Naive thymus-derived CD4-positive, alpha-beta T cell (primary cell): ENCODE measurements at regions of chr17 and their contacts with region 1.

Region 1: DNA sequence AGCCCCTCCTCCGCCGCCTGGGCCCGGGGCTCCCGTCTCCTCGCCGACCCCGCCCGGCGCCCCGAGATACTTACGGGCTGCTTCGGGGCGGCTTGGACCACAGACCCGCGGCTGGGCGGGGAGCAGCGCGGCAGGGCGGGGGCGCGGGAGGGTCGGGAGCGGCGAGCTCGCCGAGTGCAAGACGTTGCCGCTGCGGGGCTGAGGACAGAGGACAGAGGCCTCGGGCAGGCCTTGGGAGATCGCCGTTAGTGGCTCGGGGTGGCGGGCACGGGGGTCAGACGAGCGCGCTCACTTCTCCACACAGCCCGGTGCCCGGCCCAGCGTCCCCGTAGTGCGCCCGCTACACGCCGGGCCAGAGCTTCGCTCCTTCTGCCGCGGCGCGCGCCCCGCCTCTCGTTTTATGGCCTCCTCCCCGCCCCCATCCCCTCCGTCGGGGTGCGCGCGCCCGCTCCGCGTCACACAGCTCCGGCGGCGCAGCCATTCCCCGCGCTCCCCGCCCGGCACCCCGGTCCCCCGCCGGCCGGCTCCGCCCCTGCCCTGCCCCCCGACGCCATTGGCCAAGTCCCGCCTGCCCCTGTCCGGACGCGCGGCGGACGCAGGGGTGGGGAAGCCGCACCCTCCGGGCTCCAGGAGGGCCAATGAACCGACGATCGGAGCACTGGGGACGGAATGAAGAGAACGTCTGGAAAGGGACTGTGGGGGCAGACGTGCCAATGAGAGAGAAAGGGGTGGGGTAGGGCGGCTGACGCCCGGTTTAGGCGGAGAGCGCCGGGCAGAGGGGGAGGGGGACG is at the start of gene TOB1:
- DNase-seq: peak; percentile 92 to 98 (median 95)
- ATAC-seq: peak; percentile 86
- H3K4me3 ChIP-seq: peak within 1 kb of the TSS; percentile 89
- H3K4me3 Mint-ChIP-seq: peak within 1 kb of the TSS; percentile 96 to 100 (median 100)
- H3K27ac ChIP-seq: peak within 1 kb of the TSS; percentile 98
- H3K27ac Mint-ChIP-seq: peak within 1 kb of the TSS; percentile 98 to 100 (median 100)
- H3K4me1 ChIP-seq: peaks cover 41 to 50% of the 10 kb centered on the region in 2 donors
- H3K4me1 Mint-ChIP-seq: peaks cover 31 to 65% (median 57%) of the 10 kb centered on the region in 7 donors
- H3K27me3 ChIP-seq: no peaks in the 10 kb centered on the region
- H3K27me3 Mint-ChIP-seq: peaks cover 0 to 2% (median 0%) of the 10 kb centered on the region in 5 donors
- total RNA-seq, gene TOB1: 51.5 to 261 (median 131) TPM

Region 2: GRCh38 chr17:50151041-50151936 is 714.9 kb before region 1 on chr17:
- CTCF ChIA-PET with region 1: no interaction called
- POLR2A ChIA-PET with region 1: interaction called, 3 read pairs
- intact Hi-C with region 1: loop called in 1 of 2 experiments (anchors 5 kb)
- DNase-seq: peak; percentile 73 to 88 (median 79)
- ATAC-seq: peak; percentile 84
- H3K4me3 ChIP-seq: peak overlapping the region; percentile 94
- H3K4me3 Mint-ChIP-seq: peak overlapping the region; percentile 82 to 95 (median 87)
- H3K27ac ChIP-seq: peak overlapping the region; percentile 74
- H3K27ac Mint-ChIP-seq: peak overlapping the region; percentile 71 to 96 (median 84)
- H3K4me1 ChIP-seq: peaks cover 26 to 37% of the 10 kb centered on the region in 2 donors
- H3K4me1 Mint-ChIP-seq: peaks cover 11 to 52% (median 44%) of the 10 kb centered on the region in 7 donors
- H3K27me3 ChIP-seq: no peaks in the 10 kb centered on the region
- H3K27me3 Mint-ChIP-seq: no peaks in the 10 kb centered on the region

Region 3: GRCh38 chr17:50163843-50164696 is 702.1 kb before region 1 on chr17:
- CTCF ChIA-PET with region 1: no interaction called
- POLR2A ChIA-PET with region 1: no interaction called
- intact Hi-C with region 1: no loop called
- DNase-seq: no peak
- ATAC-seq: no peak
- H3K4me3 ChIP-seq: no peak overlapping the region
- H3K4me3 Mint-ChIP-seq: no peak overlapping the region
- H3K27ac ChIP-seq: no peak overlapping the region
- H3K27ac Mint-ChIP-seq: peak overlapping the region in 5 of 9 donors; percentile 4 to 93 (median 55)
- H3K4me1 ChIP-seq: peaks cover 22 to 29% of the 10 kb centered on the region in 2 donors
- H3K4me1 Mint-ChIP-seq: peaks cover 27 to 36% (median 33%) of the 10 kb centered on the region in 7 donors
- H3K27me3 ChIP-seq: no peaks in the 10 kb centered on the region
- H3K27me3 Mint-ChIP-seq: peaks cover 0 to 12% (median 0%) of the 10 kb centered on the region in 5 donors

Region 4: DNA sequence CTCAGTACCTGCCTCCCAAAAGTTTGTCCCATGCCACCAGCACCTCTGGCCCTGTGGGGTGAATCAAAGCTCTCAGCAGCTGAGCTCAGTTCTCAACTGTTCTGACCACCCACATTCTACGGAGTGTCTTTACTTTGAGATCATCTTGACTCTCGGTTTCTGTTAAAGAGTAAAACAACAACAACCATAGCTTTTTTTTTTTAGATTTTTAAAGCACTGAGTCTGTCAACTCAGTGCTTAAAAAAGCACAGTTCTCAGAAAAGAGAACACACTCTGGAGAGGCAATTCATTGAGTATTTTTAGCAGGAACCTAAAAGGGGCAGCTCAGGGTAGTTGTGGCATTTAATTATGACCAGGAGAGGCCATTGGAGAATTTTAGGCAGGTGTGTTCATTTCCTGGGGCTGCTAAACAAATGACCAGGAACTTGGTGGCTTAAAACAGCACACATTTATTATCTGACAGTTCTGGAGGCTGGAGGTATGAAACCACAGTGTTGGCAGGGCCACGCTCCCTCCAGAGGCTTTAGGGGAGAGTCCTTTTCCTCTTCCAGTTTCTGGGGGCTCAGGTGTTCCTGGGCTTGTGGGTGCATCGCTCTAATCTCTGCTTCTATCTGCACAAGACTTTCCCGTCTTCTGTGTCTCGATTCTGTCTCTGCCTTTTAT is 37.5 kb before region 1 on chr17:
- CTCF ChIA-PET with region 1: no interaction called
- POLR2A ChIA-PET with region 1: no interaction called
- intact Hi-C with region 1: no loop called
- DNase-seq: no peak
- ATAC-seq: no peak
- H3K4me3 ChIP-seq: no peak overlapping the region
- H3K4me3 Mint-ChIP-seq: no peak overlapping the region
- H3K27ac ChIP-seq: no peak overlapping the region
- H3K27ac Mint-ChIP-seq: no peak overlapping the region
- H3K4me1 ChIP-seq: no peaks in the 10 kb centered on the region
- H3K4me1 Mint-ChIP-seq: no peaks in the 10 kb centered on the region
- H3K27me3 ChIP-seq: no peaks in the 10 kb centered on the region
- H3K27me3 Mint-ChIP-seq: peaks cover 2 to 13% (median 9%) of the 10 kb centered on the region in 5 donors

Region 5: DNA sequence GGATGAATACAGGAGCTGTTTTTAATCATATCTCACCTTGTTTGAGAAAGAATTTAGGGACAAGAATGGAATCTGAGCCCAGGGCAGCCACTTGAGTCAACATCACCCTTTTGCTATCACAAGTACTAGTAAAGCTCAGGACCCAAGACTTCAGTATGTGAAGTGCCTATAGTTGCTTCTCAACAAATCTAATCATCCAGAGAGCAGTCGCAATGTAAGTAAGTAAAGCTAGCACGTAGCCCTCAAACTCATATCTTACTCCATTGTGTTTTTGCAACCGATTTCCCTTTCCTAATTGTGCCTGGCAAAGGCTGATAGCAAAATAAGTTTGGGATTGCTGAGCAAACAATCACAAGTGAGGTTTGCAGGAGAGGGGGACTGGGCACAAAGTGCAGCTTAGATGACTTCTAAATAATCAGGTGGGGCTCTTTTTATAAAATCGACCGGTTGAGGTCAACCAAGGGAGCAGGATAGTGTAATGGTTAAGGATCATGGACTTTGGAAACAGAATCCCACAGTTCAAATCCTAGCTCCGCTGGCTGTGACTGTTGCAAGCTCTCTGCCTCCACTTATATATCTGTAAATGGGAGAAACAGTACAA is 13.1 kb before region 1 on chr17:
- CTCF ChIA-PET with region 1: interaction called, 58 read pairs
- POLR2A ChIA-PET with region 1: interaction called, 282 read pairs
- intact Hi-C with region 1: loop called (anchors 1 kb)
- DNase-seq: no peak
- ATAC-seq: no peak
- H3K4me3 ChIP-seq: no peak overlapping the region
- H3K4me3 Mint-ChIP-seq: peak overlapping the region in 8 of 10 donors; percentile 75 to 89 (median 85)
- H3K27ac ChIP-seq: no peak overlapping the region
- H3K27ac Mint-ChIP-seq: peak overlapping the region in 7 of 9 donors; percentile 41 to 93 (median 88)
- H3K4me1 ChIP-seq: peaks cover 5 to 7% of the 10 kb centered on the region in 2 donors
- H3K4me1 Mint-ChIP-seq: peaks cover 18 to 40% (median 28%) of the 10 kb centered on the region in 7 donors
- H3K27me3 ChIP-seq: no peaks in the 10 kb centered on the region
- H3K27me3 Mint-ChIP-seq: peaks cover 0 to 32% (median 0%) of the 10 kb centered on the region in 5 donors

Region 6: DNA sequence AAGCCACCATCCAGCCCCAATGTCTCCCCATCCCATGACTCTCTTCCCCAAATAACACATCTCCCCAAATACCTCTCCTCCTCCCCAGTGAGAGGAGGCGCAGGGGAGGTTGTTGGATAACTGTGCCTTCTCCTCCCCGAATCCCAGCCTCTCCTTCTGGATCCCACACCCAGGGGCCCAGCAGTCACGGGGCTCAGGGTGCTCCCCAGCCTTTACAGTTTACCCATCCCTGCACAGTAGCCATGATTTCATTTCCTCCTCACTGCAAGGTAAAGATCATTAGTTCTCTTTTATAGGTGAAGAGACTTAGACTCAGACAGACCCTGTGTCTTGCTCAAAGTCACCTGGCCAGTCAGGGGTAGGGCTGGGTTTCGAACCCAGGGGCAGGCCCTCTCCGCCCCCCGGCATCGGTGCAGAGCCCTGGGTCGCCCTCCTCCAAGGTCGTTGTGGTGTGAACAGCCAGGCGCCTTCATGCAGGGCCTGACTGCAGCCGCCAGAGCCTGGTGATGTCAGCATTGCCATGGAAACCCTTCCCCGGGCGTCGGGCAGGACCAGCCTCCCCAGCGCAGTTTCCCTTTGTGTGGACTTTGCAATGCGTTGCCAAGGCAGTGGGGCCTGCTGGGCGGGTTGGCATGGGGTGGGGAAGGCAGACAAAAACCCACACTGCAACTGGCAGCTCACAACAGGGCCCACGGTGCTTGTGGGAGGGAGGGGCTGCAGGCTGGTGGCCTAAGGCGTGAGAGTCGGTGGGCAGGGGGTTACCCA is 53.3 kb after region 1 on chr17:
- CTCF ChIA-PET with region 1: interaction called, 11 read pairs
- POLR2A ChIA-PET with region 1: interaction called, 828 read pairs
- intact Hi-C with region 1: loop called (anchors 1 kb)
- DNase-seq: peak; percentile 67 to 91 (median 83)
- ATAC-seq: peak; percentile 95
- H3K4me3 ChIP-seq: no peak overlapping the region
- H3K4me3 Mint-ChIP-seq: peak overlapping the region; percentile 36 to 86 (median 75)
- H3K27ac ChIP-seq: peak overlapping the region; percentile 76
- H3K27ac Mint-ChIP-seq: peak overlapping the region; percentile 89 to 98 (median 97)
- H3K4me1 ChIP-seq: peaks cover 22 to 44% of the 10 kb centered on the region in 2 donors
- H3K4me1 Mint-ChIP-seq: peaks cover 19 to 56% (median 43%) of the 10 kb centered on the region in 7 donors
- H3K27me3 ChIP-seq: no peaks in the 10 kb centered on the region
- H3K27me3 Mint-ChIP-seq: peaks cover 0 to 9% (median 0%) of the 10 kb centered on the region in 5 donors

Region 7: GRCh38 chr17:50956750-50957523 is 90.8 kb after region 1 on chr17:
- CTCF ChIA-PET with region 1: interaction called, 27 read pairs
- POLR2A ChIA-PET with region 1: interaction called, 664 read pairs
- intact Hi-C with region 1: loop called (anchors 1 to 5 kb)
- DNase-seq: peak; percentile 39 to 72 (median 58)
- ATAC-seq: peak; percentile 92
- H3K4me3 ChIP-seq: no peak overlapping the region
- H3K4me3 Mint-ChIP-seq: peak overlapping the region in 1 of 10 donors; percentile 68
- H3K27ac ChIP-seq: no peak overlapping the region
- H3K27ac Mint-ChIP-seq: peak overlapping the region in 4 of 9 donors; percentile 17 to 62 (median 50)
- H3K4me1 ChIP-seq: peaks cover 0 to 7% of the 10 kb centered on the region in 2 donors
- H3K4me1 Mint-ChIP-seq: peaks cover 0 to 8% (median 4%) of the 10 kb centered on the region in 7 donors
- H3K27me3 ChIP-seq: no peaks in the 10 kb centered on the region
- H3K27me3 Mint-ChIP-seq: no peaks in the 10 kb centered on the region

Region 8: GRCh38 chr17:51260125-51260880 is 394.1 kb after region 1 on chr17 and contains the start of gene UTP18:
- CTCF ChIA-PET with region 1: no interaction called
- POLR2A ChIA-PET with region 1: interaction called, 3 read pairs
- intact Hi-C with region 1: loop called (anchors 1 kb)
- DNase-seq: peak; percentile 91 to 98 (median 97)
- ATAC-seq: peak; percentile 92
- H3K4me3 ChIP-seq: peak within 1 kb of the TSS; percentile 89
- H3K4me3 Mint-ChIP-seq: peak within 1 kb of the TSS; percentile 88 to 98 (median 96)
- H3K27ac ChIP-seq: peak within 1 kb of the TSS; percentile 89
- H3K27ac Mint-ChIP-seq: peak within 1 kb of the TSS; percentile 96 to 99 (median 98)
- H3K4me1 ChIP-seq: peaks cover 35 to 36% of the 10 kb centered on the region in 2 donors
- H3K4me1 Mint-ChIP-seq: peaks cover 45 to 80% (median 61%) of the 10 kb centered on the region in 7 donors
- H3K27me3 ChIP-seq: no peaks in the 10 kb centered on the region
- H3K27me3 Mint-ChIP-seq: no peaks in the 10 kb centered on the region
- total RNA-seq, gene UTP18: 31.1 to 46.2 (median 45.5) TPM